ENCODE measurements at regions of chr12 and their contacts with region 1.

Region 1: DNA sequence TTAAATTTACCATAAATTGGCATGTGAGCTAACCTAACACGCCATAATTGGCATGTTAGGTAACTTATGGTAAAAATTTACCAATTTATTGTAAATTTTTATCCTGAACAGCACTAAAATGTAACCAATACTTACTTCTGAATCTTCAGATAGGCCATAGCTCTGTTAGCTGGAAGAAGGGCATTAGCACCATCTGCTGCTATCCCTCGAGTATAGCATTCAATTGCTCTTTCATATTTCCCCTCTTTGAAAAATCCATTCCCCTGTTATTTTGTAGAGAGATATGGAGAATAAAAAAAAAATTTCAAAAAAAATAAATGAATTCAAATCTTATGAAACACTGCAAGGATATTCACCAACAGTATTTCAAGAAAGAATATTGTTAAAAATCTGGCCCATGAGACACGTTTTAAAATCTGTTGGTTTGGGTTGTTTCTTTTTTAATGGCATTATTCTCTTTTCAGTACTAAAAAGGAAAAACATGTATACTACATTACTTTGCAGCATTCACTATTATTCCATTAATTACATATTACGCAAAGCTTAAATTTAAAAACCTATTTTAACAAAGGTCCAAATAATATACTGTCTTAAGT is 19.1 kb downstream of the RPAP3 start:
- DNase-seq: peak; percentile 71
- H3K4me3 Mint-ChIP-seq: no peak overlapping the region
- H3K27ac Mint-ChIP-seq: no peak overlapping the region
- H3K4me1 Mint-ChIP-seq: peaks cover 4% of the 10 kb centered on the region
- H3K27me3 Mint-ChIP-seq: no peaks in the 10 kb centered on the region

Region 2: GRCh38 chr12:47491516-47492305 is 195.0 kb before region 1 on chr12:
- intact Hi-C with region 1: no loop called
- DNase-seq: no peak
- H3K4me3 Mint-ChIP-seq: no peak overlapping the region
- H3K27ac Mint-ChIP-seq: no peak overlapping the region
- H3K4me1 Mint-ChIP-seq: peaks cover 3% of the 10 kb centered on the region
- H3K27me3 Mint-ChIP-seq: peaks cover 2% of the 10 kb centered on the region

Region 3: DNA sequence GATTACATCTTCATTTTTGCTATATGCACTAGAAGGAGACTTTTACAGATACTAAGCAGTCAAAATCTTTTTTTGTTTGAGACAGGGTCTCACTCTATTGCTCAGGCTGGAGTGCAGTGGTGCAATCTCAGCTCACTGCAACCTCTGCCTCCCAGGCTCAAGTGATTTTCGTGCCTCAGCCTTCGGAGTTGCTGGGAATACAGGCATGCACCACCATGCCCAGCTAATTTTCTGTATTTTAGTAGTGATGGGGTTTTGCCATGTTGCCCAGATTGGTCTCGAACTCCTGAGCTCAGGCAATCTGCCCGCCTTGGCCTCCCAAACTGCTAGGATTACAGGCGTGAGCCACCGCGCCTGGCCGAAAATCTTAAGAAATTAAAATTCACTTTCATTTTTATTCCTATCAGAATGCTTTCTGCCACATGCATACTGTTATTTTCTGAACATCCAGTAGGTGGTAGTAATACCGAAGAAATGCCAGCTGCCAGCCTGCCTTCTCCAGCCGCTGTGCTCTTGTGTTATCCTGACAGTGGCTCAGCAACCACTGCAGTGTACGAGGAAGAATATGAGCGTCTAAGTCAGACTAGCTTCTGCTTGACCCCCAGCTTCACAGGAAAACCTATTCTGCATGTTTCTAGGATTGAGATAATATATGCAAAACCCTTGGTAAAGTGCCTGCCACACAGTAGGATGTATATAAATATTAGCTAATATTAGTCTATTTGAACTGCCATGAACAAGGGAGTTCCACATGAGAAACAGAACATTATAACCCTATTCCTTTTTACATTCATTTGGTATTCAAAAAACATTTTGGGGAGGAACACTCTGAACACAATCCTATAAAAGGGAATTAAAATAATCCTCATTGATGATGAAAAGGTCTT is 35.1 kb before region 1 on chr12:
- intact Hi-C with region 1: loop called (anchors 2 kb)
- DNase-seq: peak; percentile 84
- H3K4me3 Mint-ChIP-seq: peak overlapping the region; percentile 7
- H3K27ac Mint-ChIP-seq: peak overlapping the region; percentile 5
- H3K4me1 Mint-ChIP-seq: peaks cover 14% of the 10 kb centered on the region
- H3K27me3 Mint-ChIP-seq: no peaks in the 10 kb centered on the region

Region 4: GRCh38 chr12:48038085-48038484 is 351.3 kb after region 1 on chr12:
- intact Hi-C with region 1: no loop called
- DNase-seq: no peak
- H3K4me3 Mint-ChIP-seq: no peak overlapping the region
- H3K27ac Mint-ChIP-seq: no peak overlapping the region
- H3K4me1 Mint-ChIP-seq: peaks cover 5% of the 10 kb centered on the region
- H3K27me3 Mint-ChIP-seq: no peaks in the 10 kb centered on the region

Measured in activated CD4-positive, alpha-beta T cell treated with anti-CD3 and anti-CD28 coated beads, Interleukin-2, amount 10 ng/mL, durations not matched to agents 24 days and 14 days (primary cell).